RWPE1 (cell line): ENCODE measurements at regions of chr19 and their contacts with region 1.

Region 1: DNA sequence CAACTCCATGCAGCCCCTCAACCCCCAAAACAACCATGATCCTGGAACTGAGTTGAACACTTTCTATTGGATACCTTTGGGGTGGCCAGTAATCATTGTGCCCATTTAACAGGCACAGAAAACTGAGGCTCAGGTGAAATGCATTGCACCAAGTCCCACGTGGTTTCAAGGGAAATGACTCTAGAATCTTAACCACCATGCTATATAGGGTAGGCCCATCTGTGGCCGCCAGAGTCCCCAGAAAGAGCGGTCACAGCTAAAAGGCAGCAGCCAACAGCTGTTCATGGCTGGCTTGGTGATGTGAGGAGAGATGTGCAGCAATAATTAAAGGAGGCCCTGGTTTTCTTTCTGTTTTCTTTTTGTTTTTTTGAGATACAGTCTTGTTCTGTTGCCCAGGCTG is 2.6 kb downstream of the CNN1 start:
- DNase-seq: no peak
- H3K27ac ChIP-seq: no peak overlapping the region
- CTCF ChIP-seq: no peak

Region 2: DNA sequence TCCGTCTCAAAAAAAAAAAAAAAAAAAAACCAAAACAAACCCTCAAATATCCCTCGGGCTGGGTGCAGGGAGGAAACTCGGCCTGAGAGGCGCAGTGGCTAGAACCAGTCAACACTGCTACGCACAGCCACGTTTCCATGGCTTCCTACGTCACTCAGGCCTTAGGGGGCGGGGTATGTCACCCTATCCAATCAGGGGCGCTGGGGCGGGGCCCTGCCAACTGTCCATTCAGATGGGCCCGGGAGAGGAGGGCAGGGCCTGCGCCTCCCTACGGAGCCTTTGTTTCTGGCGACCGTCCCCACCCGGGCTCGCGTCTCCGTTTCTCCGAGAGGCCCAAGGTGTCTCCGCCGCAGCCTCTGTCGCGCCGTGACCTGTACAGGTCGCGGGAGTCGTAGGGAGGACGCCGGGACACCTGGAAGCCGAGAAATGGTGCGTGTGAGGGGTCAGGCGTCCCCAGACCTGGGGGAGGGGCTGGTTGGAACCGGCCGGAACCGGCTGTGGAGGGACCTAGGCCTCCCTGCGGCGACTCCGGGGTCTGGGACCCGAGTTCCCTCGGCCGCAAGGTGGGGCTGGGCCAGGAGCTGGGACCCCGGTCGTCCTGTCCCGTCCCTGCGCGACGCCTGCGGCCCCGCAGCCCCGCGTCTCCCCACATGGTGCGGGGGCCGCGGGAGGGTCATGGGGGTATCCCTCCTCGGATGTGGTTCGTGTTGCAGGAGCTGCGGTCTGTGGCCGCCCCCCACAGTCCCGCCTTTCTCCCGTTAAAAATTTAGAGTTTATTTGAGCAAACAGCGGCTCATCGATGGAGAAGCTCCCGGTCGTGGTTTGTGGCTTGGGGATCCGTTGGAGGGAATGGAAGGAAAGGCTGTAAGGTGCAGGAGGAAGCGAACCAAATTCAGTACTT is 56.2 kb after region 1 on chr19 and contains the start of gene ZNF627:
- CTCF ChIA-PET with region 1: no interaction called
- POLR2A ChIA-PET with region 1: interaction called, 16 read pairs
- DNase-seq: peak; percentile 99
- H3K27ac ChIP-seq: peak within 1 kb of the TSS; percentile 83
- CTCF ChIP-seq: no peak